Caco-2 (cell line): ENCODE measurements at regions of chr9 and their contacts with region 1.

Region 1: DNA sequence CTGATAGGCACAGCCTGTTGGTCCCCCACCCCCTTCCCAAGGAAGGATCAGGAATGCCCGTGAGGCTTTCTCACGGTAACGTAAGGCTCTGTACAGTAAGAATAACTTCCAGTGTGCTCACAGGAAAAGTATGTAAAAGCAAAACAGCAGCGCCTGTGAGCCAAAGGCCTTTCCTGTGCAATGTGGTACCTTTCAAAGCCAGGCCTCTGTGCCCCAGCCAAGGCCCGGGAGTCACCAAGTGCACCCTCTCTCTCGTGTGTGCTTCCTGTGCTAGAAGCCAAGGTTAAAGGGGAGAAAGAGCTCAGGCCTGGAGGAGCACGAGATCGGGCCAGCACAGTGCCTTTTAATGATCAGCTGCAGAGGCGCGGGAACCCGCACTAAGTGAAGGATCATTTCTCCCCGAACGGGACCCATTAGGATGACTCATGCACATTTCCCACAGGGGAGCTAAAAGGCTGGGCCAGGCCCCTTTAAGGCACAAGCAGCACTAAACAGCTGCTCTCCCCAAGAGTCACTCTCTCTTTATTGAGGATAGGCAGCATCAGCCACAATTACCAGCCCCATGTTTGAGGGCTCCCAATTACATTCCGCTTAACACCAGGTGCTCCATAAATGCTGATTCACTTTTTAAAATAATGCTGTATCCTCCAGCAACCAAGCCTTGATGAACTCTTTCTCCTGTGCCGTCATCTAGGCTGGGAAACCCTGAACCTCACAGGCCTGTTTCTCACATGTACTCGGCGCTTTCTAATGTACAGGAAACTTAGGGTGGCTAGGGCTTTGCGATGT is 42.8 kb downstream of the SHB start:
- DNase-seq: no peak
- H3K4me3 ChIP-seq: no peak overlapping the region
- H3K4me3 Mint-ChIP-seq: no peak overlapping the region
- H3K27ac Mint-ChIP-seq: peak overlapping the region; percentile 94
- H3K4me1 ChIP-seq: peaks cover 51% of the 10 kb centered on the region
- H3K4me1 Mint-ChIP-seq: peaks cover 35% of the 10 kb centered on the region
- H3K27me3 ChIP-seq: no peaks in the 10 kb centered on the region
- H3K27me3 Mint-ChIP-seq: no peaks in the 10 kb centered on the region
- CTCF ChIP-seq: no peak

Region 2: GRCh38 chr9:38008168-38009034 is 17.8 kb before region 1 on chr9:
- CTCF ChIA-PET with region 1: no interaction called
- POLR2A ChIA-PET with region 1: no interaction called
- intact Hi-C with region 1: loop called (anchors 1 kb)
- DNase-seq: peak; percentile 56 to 68
- H3K4me3 ChIP-seq: no peak overlapping the region
- H3K4me3 Mint-ChIP-seq: peak overlapping the region; percentile 2
- H3K27ac Mint-ChIP-seq: peak overlapping the region; percentile 69
- H3K4me1 ChIP-seq: peaks cover 21% of the 10 kb centered on the region
- H3K4me1 Mint-ChIP-seq: peaks cover 18% of the 10 kb centered on the region
- H3K27me3 ChIP-seq: no peaks in the 10 kb centered on the region
- H3K27me3 Mint-ChIP-seq: no peaks in the 10 kb centered on the region
- CTCF ChIP-seq: no peak

Region 3: DNA sequence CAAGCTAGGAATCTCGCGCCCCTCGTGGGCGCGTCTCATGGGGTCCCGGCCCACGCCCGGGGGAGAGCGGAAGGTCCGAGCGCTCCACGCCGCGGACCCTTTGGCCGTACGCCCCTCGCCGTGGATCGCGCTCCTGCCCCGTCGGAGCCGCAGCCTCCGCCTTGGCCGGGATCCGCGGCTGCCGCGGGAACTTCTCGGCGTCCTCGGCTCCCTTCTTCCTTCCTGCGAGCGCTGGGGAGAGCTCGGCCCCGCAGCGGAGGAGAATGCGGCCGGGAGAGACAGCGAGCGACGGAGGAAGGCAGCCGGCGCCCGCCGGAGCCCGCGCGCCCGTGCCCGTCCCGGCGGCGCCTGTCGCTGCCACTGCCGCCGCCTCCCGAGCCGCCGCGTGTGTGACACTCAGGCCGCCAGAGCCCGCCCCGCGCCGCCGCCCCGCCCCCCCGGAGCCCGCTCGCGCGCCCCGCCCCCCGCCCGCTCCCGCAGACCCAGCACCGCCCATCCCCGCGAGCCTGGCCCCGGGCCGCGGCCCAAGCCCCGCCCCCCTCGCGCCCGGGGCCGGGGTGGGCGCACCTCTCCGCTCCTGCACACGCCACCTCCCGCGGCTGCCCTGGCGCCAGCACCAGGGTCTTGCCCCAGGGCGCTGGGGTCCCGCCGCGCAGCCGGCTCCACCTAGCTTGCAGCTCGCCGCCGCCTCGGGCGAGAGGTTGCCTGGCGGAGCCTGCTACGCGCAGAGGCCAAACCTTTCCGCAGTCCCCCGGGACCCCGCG is 42.8 kb after region 1 on chr9 and contains the start of gene SHB:
- CTCF ChIA-PET with region 1: interaction called, 3 read pairs
- POLR2A ChIA-PET with region 1: no interaction called
- intact Hi-C with region 1: loop called (anchors 1 kb)
- DNase-seq: peak; percentile 81 to 84
- H3K4me3 ChIP-seq: peak within 1 kb of the TSS; percentile 92
- H3K4me3 Mint-ChIP-seq: peak within 1 kb of the TSS; percentile 95
- H3K27ac Mint-ChIP-seq: peak within 1 kb of the TSS; percentile 83
- H3K4me1 ChIP-seq: peaks cover 32% of the 10 kb centered on the region
- H3K4me1 Mint-ChIP-seq: peaks cover 24% of the 10 kb centered on the region
- H3K27me3 ChIP-seq: no peaks in the 10 kb centered on the region
- H3K27me3 Mint-ChIP-seq: no peaks in the 10 kb centered on the region
- CTCF ChIP-seq: no peak
- total RNA-seq, gene SHB: 18.3 and 18.4 TPM in 2 replicates

Region 4: GRCh38 chr9:38214432-38214831 is 188.2 kb after region 1 on chr9:
- CTCF ChIA-PET with region 1: no interaction called
- POLR2A ChIA-PET with region 1: no interaction called
- intact Hi-C with region 1: no loop called
- DNase-seq: no peak
- H3K4me3 ChIP-seq: no peak overlapping the region
- H3K4me3 Mint-ChIP-seq: no peak overlapping the region
- H3K27ac Mint-ChIP-seq: no peak overlapping the region
- H3K4me1 ChIP-seq: 0 out of 2 replicates have a peak, but pooled peaks cover 5% of the 10 kb centered on the region
- H3K4me1 Mint-ChIP-seq: no peaks in the 10 kb centered on the region
- H3K27me3 ChIP-seq: no peaks in the 10 kb centered on the region
- H3K27me3 Mint-ChIP-seq: no peaks in the 10 kb centered on the region
- CTCF ChIP-seq: no peak